CD4-positive, alpha-beta memory T cell (primary cell): ENCODE measurements at regions of chr14 and their contacts with region 1.

Region 1: DNA sequence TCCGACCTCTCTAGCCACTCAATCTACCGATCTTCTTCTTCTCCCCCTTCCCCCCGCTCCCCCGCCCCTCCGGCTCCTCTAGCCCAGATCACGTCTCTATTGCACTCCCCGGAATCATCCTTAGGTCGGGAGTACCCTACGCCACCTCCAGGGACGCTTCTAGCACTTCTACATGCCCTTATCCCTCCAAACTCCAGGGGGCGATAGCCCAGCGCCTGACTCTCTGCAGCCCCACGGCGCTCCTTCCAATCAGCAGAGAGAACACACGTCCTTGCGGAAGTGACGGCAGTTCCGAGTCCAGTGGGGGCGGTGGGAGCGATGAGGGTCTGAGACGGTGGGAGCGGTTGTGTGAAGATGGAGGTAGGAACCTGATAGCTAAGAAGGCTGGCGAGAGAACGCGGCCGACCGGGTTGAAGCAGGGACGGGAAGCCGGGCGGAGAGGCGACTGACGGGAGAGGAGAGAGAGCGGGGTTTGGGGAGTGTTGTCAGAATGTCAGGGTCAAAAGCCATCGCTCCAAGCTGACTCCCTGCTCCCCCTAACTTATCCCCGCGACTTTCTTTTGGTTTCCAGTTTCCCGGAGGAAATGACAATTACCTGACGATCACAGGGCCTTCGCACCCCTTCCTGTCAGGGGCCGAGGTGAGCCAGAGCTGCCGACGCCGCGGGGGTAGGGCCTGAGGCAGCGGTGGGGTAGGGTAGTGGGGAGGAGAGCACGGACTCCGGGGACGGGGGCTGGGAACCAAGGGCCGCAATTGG is at the starts of genes RAB2B and TOX4:
- DNase-seq: peak; percentile 98
- H3K4me3 ChIP-seq: peak within 1 kb of the TSS; percentile 69 to 97
- H3K4me3 Mint-ChIP-seq: peak within 1 kb of the TSS; percentile 98 to 100 (median 100)
- H3K27ac ChIP-seq: peak within 1 kb of the TSS; percentile 81
- H3K27ac Mint-ChIP-seq: peak within 1 kb of the TSS; percentile 95 to 100 (median 100)
- H3K4me1 ChIP-seq: peaks cover 27% of the 10 kb centered on the region
- H3K4me1 Mint-ChIP-seq: peaks cover 28 to 63% (median 45%) of the 10 kb centered on the region in 4 donors
- H3K27me3 ChIP-seq: no peaks in the 10 kb centered on the region
- H3K27me3 Mint-ChIP-seq: no peaks in the 10 kb centered on the region
- total RNA-seq, gene RAB2B: 29.3 to 30.4 TPM
- total RNA-seq, gene TOX4: 83.6 to 86.0 TPM

Region 2: DNA sequence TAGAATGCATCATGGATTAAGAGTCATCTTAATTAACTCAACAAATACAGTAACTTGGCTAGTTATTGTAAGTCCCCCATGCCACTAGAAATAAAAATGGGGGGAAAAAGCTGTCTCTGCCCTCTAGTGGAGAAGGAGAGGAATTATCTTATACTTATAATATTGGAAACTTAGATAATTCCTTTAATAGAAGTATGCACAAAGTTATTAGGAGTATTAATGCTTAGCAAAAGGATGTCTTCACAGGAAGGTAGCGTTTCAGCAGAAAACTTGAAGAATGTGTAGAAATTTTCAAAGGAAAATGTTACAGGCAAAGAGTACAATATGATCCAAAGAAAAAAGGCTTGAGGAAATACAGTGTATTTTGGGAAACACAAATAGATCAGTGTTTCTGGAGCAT is 341.1 kb before region 1 on chr14:
- CTCF ChIA-PET with region 1: no interaction called
- POLR2A ChIA-PET with region 1: no interaction called
- intact Hi-C with region 1: no loop called
- DNase-seq: peak in 4 of 5 donors; percentile 2 to 8 (median 4)
- H3K4me3 ChIP-seq: no peak overlapping the region
- H3K4me3 Mint-ChIP-seq: no peak overlapping the region
- H3K27ac ChIP-seq: no peak overlapping the region
- H3K27ac Mint-ChIP-seq: no peak overlapping the region
- H3K4me1 ChIP-seq: no peaks in the 10 kb centered on the region
- H3K4me1 Mint-ChIP-seq: no peaks in the 10 kb centered on the region
- H3K27me3 ChIP-seq: no peaks in the 10 kb centered on the region
- H3K27me3 Mint-ChIP-seq: peaks cover 2 to 3% of the 10 kb centered on the region in 2 donors

Region 3: DNA sequence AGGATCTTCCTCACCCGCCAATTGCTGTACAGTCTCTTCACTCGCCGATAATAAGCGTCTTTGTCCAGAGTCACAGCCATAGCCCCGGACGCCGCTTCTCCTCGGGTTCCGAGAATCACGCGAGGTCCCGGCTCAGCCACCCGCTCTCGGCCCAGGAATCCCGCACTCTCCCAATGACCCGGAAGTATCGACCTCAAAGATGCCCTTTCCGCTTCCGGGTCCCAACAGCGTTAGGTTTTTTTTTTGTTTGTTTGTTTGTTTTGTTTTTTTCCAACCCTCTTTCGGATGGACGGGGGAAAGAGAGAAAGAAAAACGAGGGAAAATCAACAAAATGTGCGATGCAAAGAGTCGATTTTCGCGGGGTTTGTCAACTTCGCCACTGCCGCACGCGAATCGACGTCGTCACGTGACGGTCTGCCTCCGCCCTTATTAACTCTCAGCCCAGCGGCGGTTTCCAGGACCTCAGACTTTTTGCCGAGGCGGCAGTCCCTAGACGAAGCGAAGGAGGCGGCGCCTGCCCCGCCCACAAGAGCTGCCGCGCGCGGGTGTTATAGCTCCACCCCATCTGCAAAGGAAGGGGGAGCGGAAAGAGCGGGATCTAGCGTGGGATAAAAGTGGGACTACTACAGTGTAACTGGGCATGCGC is 93.1 kb before region 1 on chr14 and contains the start of gene SUPT16H:
- CTCF ChIA-PET with region 1: no interaction called
- POLR2A ChIA-PET with region 1: interaction called, 9 read pairs
- intact Hi-C with region 1: loop called (anchors 1 kb)
- DNase-seq: peak; percentile 91 to 96 (median 93)
- H3K4me3 ChIP-seq: peak within 1 kb of the TSS; percentile 98 to 99
- H3K4me3 Mint-ChIP-seq: peak within 1 kb of the TSS; percentile 95 to 100 (median 97)
- H3K27ac ChIP-seq: peak within 1 kb of the TSS; percentile 82
- H3K27ac Mint-ChIP-seq: peak within 1 kb of the TSS; percentile 96 to 100 (median 99)
- H3K4me1 ChIP-seq: peaks cover 47% of the 10 kb centered on the region
- H3K4me1 Mint-ChIP-seq: peaks cover 25 to 53% (median 38%) of the 10 kb centered on the region in 4 donors
- H3K27me3 ChIP-seq: no peaks in the 10 kb centered on the region
- H3K27me3 Mint-ChIP-seq: no peaks in the 10 kb centered on the region
- total RNA-seq, gene SUPT16H: 84.5 to 87.2 TPM

Region 4: DNA sequence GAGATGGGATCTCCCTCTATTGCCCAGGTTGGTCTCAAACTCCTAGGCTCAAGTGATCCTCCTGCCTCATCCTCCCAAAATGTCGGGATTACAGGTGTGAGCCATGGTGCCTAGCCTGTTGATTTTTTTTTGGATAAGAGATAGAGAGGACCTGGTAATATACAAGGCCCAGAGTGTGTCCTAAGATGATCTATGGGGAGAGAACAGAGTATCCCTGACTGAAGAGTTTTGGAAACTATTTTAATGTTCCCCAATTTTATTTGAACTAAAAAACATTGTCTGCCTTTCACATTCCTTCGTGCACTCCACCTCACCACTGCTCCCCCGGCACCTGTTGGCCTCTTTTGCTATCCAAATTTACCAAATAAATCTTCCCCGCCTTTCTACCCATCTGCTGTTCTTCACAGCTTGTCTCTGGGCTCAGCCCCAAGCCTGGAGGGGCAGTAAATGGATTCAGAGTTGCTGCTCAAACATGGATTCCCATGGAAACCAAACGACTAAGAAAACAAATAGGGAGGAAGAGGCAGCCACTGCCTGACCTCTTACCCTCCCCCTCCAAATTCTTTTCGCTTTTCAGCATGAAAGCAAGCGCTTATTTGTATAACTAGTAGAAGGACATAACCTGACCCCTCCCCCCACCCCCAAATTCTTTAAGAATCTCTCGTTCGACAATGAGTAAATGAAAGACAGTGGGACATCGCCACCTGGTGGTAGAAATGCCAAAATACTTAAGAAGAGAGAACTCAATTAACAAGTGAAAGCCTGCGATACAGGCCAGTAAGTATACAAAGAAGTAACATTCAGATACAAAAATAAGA is 80.2 kb after region 1 on chr14:
- CTCF ChIA-PET with region 1: interaction called, 6 read pairs
- POLR2A ChIA-PET with region 1: no interaction called
- intact Hi-C with region 1: loop called (anchors 1 kb)
- DNase-seq: peak; percentile 71 to 77 (median 75)
- H3K4me3 ChIP-seq: peak overlapping the region in 1 of 2 donors; percentile 35
- H3K4me3 Mint-ChIP-seq: peak overlapping the region in 7 of 8 donors; percentile 0 to 58 (median 6)
- H3K27ac ChIP-seq: no peak overlapping the region
- H3K27ac Mint-ChIP-seq: peak overlapping the region in 5 of 7 donors; percentile 3 to 90 (median 83)
- H3K4me1 ChIP-seq: peaks cover 6% of the 10 kb centered on the region
- H3K4me1 Mint-ChIP-seq: peaks cover 4 to 11% (median 6%) of the 10 kb centered on the region in 4 donors
- H3K27me3 ChIP-seq: no peaks in the 10 kb centered on the region
- H3K27me3 Mint-ChIP-seq: no peaks in the 10 kb centered on the region